PC-9 (cell line): ENCODE measurements at regions of chr22 and their contacts with region 1.

Region 1: DNA sequence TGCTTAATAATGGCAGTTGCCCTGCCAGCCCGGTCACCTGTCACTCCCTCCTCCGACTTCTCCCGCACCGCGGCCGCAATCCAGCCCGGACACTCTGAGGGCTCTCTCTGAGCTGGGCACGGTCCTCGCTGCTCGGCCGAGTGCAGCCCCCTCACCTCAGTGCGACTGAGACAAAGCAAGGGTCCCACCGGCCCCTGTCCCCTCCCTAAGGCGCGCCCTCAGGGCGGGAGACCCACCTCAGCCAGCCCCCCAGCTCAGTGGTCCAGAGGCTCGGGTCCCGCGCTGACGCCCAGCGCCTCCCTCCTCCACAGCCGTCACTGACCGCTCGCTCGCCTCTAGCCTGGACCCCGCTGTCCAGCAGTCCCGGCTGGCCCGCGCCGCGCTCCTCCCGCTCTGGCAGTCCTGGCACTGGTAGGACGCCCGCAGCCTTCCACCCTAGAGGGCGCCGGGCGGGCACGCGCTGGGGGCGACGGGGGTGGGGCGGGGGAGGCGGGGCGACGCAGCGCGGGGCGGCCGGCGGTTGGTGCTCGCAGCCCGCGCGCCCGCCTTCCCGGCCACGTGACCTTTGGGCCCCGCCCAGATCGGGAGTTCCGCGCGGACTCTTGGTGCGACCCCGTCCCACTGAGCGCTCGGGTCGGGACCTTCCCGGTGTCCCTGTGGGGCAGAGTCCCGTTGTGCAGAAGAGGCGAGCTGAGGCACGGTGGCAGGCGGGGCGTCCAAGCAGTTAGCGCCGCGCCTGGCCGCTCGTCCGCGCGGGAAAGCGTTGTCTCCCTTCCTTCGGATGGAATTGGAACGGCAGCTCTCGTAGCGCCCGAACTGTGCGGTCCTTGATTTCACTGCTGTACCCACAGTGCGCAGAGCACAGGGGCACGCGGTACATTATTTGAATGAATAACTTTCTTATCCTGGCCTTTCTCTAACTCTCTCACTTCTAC is 7.8 kb upstream of the L3MBTL2 start:
- DNase-seq: peak; percentile 62 to 79
- H3K4me3 ChIP-seq: peak overlapping the region; percentile 82
- H3K27ac ChIP-seq: no peak overlapping the region
- H3K4me1 ChIP-seq: peaks cover 38% of the 10 kb centered on the region
- H3K27me3 ChIP-seq: no peaks in the 10 kb centered on the region
- CTCF ChIP-seq: no peak

Region 2: GRCh38 chr22:40904101-40904500 is 293.2 kb before region 1 on chr22:
- CTCF ChIA-PET with region 1: no interaction called
- POLR2A ChIA-PET with region 1: no interaction called
- intact Hi-C with region 1: no loop called
- DNase-seq: peak in 1 of 2 experiments; percentile 51
- H3K4me3 ChIP-seq: no peak overlapping the region
- H3K27ac ChIP-seq: 0 out of 2 replicates have a peak overlapping the region, but pooled peaks have one; percentile 18
- H3K4me1 ChIP-seq: no peaks in the 10 kb centered on the region
- H3K27me3 ChIP-seq: no peaks in the 10 kb centered on the region
- CTCF ChIP-seq: no peak

Region 3: DNA sequence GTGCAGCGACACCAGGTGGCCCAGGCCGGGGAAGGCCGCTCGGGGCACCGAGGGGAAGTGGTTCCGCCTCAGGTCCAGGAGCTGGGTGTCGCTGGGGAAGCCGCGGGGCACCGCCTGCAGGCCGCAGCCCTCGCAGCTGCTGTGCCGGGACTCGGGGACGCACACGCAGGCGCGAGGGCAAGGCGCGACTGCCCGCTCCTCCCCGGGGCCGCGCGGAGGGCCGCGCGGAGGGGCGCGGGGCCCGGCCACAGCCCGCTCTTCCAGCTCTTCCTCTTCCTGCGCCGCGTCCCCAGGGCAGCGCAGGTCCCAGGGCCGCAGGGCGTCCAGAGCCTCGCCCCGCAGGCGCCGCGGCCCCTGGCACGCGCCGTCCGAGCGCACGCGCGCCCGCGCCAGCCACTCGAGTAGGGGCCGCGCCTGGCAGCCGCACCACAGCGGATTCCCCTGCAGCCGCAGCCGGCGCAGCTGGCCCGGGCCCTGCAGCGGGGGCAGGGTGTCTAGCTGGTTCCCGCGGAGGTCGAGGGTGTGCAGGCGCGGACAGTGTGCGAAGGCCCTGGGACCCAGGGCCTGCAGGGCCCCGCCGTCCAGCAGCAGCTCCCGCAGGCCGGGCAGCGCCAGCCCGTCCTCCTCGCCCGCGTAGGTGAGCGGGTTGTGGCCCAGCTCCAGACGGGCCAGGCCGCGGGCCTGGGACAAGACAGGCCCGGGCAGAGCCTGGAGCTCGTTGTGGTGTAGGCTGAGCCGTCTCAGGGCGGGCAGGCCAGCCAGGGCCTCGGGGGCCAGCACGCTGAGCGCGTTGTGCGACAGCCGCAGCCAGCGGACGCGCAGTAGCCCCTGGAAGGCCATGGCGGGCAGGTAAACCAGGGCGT is 40.6 kb after region 1 on chr22:
- CTCF ChIA-PET with region 1: interaction called, 10 read pairs
- POLR2A ChIA-PET with region 1: no interaction called
- intact Hi-C with region 1: no loop called
- DNase-seq: peak; percentile 42 to 82
- H3K4me3 ChIP-seq: peak overlapping the region; percentile 50; the same call in 1 of the 2 replicates
- H3K27ac ChIP-seq: no peak overlapping the region
- H3K4me1 ChIP-seq: no peaks in the 10 kb centered on the region
- H3K27me3 ChIP-seq: no peaks in the 10 kb centered on the region
- CTCF ChIP-seq: no peak; the same call in 1 of the 2 replicates